Lower lobe of right lung (tissue), 2 donors: ENCODE measurements at regions of chr4 and their contacts with region 1.

Region 1: GRCh38 chr4:119286377-119287002 is 35.4 kb downstream of the FABP2 start:
- DNase-seq: no peak
- ATAC-seq: peak in 1 of 2 donors; percentile 61
- H3K4me3 ChIP-seq: no peak overlapping the region
- H3K27ac ChIP-seq: no peak overlapping the region
- H3K4me1 ChIP-seq: peaks cover 23% of the 10 kb centered on the region
- H3K27me3 ChIP-seq: no peaks in the 10 kb centered on the region
- CTCF ChIP-seq: peak; percentile 64

Region 2: DNA sequence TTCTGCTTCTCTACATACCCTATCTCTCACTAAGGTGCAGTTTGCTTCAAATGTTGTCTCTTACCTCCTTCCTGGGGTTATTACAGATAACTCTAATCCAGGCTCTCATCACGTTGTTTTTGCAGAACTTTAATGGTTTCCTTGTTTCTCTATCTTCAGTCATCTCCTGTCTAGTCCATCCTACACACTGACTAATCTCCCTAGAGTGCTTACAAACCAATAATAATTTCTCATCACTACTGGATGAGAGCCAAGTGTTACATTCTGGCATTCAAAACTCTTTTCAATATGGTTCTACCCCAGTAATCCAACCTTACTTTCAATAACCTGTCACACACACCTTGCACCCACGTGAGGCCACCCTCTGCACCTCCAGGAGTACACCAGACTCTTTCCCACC is 311.7 kb before region 1 on chr4:
- intact Hi-C with region 1: loop called (anchors 5 kb)
- DNase-seq: no peak
- ATAC-seq: no peak
- H3K4me3 ChIP-seq: no peak overlapping the region
- H3K27ac ChIP-seq: no peak overlapping the region
- H3K4me1 ChIP-seq: no peaks in the 10 kb centered on the region
- H3K27me3 ChIP-seq: no peaks in the 10 kb centered on the region
- CTCF ChIP-seq: no peak

Region 3: GRCh38 chr4:119041951-119042560 is 244.4 kb before region 1 on chr4:
- intact Hi-C with region 1: loop called (anchors 5 kb)
- DNase-seq: no peak
- ATAC-seq: peak; percentile 88 to 92
- H3K4me3 ChIP-seq: no peak overlapping the region
- H3K27ac ChIP-seq: peak overlapping the region; percentile 54
- H3K4me1 ChIP-seq: peaks cover 40% of the 10 kb centered on the region
- H3K27me3 ChIP-seq: no peaks in the 10 kb centered on the region
- CTCF ChIP-seq: peak; percentile 59